Left colon (tissue), 2 donors: ENCODE measurements at regions of chr6 and their contacts with region 1.

Region 1: GRCh38 chr6:47309291-47310130 is at the start of gene TNFRSF21:
- DNase-seq: peak; percentile 94
- ATAC-seq: peak; percentile 94
- total RNA-seq, gene TNFRSF21: 67.7 to 129 TPM

Region 2: GRCh38 chr6:46848684-46849360 is 460.7 kb before region 1 on chr6:
- intact Hi-C with region 1: loop called in 1 of 2 experiments (anchors 10 kb)
- DNase-seq: peak; percentile 84 to 93
- ATAC-seq: peak; percentile 99

Region 3: DNA sequence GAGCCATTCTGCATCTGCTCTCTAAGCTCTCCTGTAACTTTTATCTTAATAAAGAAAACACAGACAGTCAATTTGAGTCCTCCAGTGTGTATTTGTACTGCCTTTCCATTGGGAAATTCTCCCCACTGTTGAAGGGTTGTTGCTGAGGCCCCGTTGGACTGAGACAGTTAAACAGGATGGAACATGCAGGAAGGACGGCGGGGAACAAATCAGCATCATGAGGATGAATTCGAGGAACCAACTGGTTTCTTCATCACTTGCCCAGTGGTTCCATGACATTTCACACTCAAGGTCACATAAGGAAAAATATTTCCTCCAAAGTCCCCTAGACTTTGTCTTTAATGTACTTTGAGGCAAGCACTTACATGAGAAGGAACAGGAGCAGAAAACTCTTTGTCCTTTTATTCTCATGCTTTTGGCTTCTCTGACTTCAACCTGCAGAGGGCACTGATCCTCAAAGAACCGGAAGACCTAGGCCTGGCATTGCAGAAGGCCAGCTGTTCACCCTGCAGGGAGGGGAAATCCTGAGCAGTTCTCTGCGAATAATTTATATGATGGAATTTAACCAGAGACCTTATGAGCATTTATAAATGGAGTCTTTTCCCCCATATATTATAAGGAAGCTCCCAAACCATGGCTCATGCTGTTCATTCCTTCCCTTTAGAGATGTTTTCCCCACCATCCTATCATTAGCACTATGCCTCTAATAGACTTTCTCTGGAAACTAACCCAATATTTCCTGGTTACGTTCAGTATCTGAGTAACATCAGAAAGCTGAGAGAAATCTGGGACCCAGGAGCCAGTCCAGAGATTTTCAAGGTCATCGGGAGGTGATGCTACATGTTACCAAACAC is 212.2 kb before region 1 on chr6:
- intact Hi-C with region 1: loop called in 1 of 2 experiments (anchors 2 kb)
- DNase-seq: peak; percentile 69 to 78
- ATAC-seq: peak; percentile 70

Region 4: GRCh38 chr6:47242483-47243386 is 66.8 kb before region 1 on chr6:
- intact Hi-C with region 1: loop called in 1 of 2 experiments (anchors 10 kb)
- DNase-seq: peak; percentile 91 to 95
- ATAC-seq: peak; percentile 98